BJ (cell line): ENCODE measurements at regions of chr7 and their contacts with region 1.

Region 1: DNA sequence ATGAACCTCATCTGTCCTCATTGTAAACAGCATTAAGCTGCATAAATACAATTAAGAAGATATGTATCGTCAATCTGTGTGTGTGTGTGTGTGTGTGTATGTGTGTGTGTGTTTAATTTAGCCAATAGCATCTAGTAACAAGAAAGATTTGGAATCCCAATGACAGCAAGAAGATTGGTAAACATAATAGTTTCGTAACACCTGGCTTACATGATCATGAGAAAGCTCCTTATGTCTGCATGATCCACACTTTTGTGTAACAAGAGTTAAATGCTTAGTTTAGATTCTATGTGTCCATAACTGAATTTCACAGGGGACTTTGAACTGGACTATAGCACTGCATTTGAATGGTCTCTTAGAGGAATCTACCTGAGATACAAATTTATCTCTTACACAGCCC is 191.0 kb upstream of the BET1 start:
- DNase-seq: no peak
- H3K4me3 ChIP-seq: no peak overlapping the region
- H3K27me3 ChIP-seq: no peaks in the 10 kb centered on the region
- CTCF ChIP-seq: no peak

Region 2: DNA sequence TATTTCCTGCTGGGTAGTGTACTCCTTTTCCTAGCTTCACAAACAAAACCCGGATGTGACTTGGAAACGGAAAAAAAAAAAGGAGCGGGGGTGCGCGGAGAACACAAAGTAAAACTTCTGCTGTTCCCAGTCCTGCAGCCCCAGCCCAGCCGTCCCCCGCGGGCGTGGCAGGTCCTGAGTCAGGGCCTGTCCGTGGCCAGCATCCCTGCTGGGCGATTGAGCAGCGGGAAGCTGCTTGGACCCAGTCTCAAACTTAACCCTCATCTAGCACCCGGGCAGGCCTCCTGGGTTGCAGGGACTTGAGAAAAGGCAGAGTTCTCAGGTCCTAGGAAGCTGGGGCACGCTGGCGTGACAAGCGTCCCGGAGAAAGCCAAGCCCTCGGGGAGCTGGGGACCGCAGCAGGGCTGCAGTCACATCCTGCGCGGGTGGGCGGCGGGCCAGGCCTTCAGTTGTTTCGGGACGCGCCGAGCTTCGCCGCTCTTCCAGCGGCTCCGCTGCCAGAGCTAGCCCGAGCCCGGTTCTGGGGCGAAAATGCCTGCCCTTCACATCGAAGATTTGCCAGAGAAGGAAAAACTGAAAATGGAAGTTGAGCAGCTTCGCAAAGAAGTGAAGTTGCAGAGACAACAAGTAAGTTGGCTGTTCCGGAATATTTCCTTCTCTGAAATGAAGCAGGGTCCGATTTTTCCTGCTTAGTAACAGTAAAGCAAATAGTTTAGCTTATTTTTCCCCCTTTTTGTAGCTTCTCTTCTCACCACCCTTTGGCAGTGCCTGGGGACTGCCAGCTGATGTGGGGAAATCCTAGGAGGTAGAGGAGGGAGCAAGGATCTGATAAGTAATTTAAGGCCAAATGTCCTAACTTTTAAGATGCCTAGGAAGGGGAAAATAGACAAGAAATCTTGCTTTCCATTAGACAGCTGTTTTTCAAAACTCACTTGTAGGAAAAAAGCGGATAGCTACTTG is 273.3 kb before region 1 on chr7 and contains the start of gene GNG11:
- CTCF ChIA-PET with region 1: no interaction called
- POLR2A ChIA-PET with region 1: interaction called, 11 read pairs
- DNase-seq: no peak
- H3K4me3 ChIP-seq: peak within 1 kb of the TSS; percentile 65
- H3K27me3 ChIP-seq: no peaks in the 10 kb centered on the region
- CTCF ChIP-seq: 0 out of 2 replicates have a peak, but pooled peaks have one; percentile 5
- polyA plus RNA-seq, gene GNG11: 9.3 and 16.0 TPM in 2 replicates

Region 3: DNA sequence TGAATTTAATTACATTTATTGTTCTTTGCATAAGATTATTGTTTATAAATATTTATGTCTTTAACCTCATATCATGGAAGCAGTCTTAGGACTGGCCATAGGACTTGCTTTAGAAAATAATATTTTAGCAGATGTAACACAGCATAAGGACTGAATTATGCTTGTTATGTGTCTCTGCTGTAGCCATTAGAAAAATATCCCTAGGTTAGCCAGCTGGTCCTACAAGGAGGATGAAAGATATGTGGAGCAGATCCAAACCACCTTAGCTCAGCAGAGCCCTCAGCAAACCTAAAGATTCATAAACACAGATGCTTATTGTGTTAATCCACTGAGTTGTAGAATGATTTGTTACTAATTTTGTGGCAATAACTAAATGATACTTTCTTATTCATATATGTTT is 33.5 kb after region 1 on chr7:
- CTCF ChIA-PET with region 1: no interaction called
- POLR2A ChIA-PET with region 1: no interaction called
- DNase-seq: no peak
- H3K4me3 ChIP-seq: no peak overlapping the region
- H3K27me3 ChIP-seq: no peaks in the 10 kb centered on the region
- CTCF ChIP-seq: no peak